ENCODE measurements at regions of chr3 and their contacts with region 1.

Region 1: GRCh38 chr3:27423463-27423862 is 54.3 kb upstream of the NEK10 start:
- DNase-seq: peak; percentile 81
- ATAC-seq: peak; percentile 84
- H3K4me3 ChIP-seq: no peak overlapping the region
- H3K27ac ChIP-seq: no peak overlapping the region
- H3K4me1 ChIP-seq: no peaks in the 10 kb centered on the region; the same call in none of the 2 replicates
- H3K27me3 ChIP-seq: no peaks in the 10 kb centered on the region
- CTCF ChIP-seq: no peak
- POLR2A ChIP-seq: no peak
- RAD21 ChIP-seq: 0 out of 2 replicates have a peak, but pooled peaks have one; percentile 5

Region 2: GRCh38 chr3:27127195-27127594 is 296.3 kb before region 1 on chr3:
- CTCF ChIA-PET with region 1: no interaction called
- POLR2A ChIA-PET with region 1: no interaction called
- dilution Hi-C with region 1: no loop called
- in situ Hi-C with region 1: no loop called
- intact Hi-C with region 1: no loop called
- DNase-seq: no peak
- ATAC-seq: no peak
- H3K4me3 ChIP-seq: no peak overlapping the region
- H3K27ac ChIP-seq: no peak overlapping the region
- H3K4me1 ChIP-seq: no peaks in the 10 kb centered on the region
- H3K27me3 ChIP-seq: no peaks in the 10 kb centered on the region
- CTCF ChIP-seq: no peak
- POLR2A ChIP-seq: no peak
- RAD21 ChIP-seq: no peak

Region 3: DNA sequence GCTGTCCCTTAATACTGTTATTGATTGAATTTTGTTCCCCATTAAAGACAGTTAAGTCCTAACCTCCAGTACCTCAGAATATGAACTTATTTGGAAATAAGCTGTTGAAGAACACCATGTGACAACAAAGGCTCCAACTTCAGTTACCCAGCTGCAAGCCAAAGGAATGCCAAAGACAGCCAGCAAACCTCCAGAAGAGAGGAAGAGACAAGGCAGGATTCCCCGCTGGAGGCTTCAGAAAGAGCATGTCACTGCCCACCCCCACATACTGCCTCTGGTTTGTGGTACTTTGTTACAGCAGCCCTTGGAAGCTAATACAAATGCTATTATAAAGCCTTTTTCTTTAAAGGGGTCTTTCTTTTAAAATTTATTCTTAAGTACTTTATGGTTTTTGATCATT is 35.8 kb before region 1 on chr3:
- CTCF ChIA-PET with region 1: no interaction called
- POLR2A ChIA-PET with region 1: no interaction called
- dilution Hi-C with region 1: no loop called
- in situ Hi-C with region 1: no loop called
- intact Hi-C with region 1: loop called (anchors 5 kb)
- DNase-seq: peak; percentile 13
- ATAC-seq: no peak
- H3K4me3 ChIP-seq: no peak overlapping the region
- H3K27ac ChIP-seq: no peak overlapping the region
- H3K4me1 ChIP-seq: no peaks in the 10 kb centered on the region
- H3K27me3 ChIP-seq: no peaks in the 10 kb centered on the region
- CTCF ChIP-seq: no peak
- POLR2A ChIP-seq: no peak
- RAD21 ChIP-seq: no peak